Activated CD8-positive, alpha-beta T cell treated with anti-CD3 and anti-CD28 coated beads for 36 hours (primary cell): ENCODE measurements at regions of chr5 and their contacts with region 1.

Region 1: DNA sequence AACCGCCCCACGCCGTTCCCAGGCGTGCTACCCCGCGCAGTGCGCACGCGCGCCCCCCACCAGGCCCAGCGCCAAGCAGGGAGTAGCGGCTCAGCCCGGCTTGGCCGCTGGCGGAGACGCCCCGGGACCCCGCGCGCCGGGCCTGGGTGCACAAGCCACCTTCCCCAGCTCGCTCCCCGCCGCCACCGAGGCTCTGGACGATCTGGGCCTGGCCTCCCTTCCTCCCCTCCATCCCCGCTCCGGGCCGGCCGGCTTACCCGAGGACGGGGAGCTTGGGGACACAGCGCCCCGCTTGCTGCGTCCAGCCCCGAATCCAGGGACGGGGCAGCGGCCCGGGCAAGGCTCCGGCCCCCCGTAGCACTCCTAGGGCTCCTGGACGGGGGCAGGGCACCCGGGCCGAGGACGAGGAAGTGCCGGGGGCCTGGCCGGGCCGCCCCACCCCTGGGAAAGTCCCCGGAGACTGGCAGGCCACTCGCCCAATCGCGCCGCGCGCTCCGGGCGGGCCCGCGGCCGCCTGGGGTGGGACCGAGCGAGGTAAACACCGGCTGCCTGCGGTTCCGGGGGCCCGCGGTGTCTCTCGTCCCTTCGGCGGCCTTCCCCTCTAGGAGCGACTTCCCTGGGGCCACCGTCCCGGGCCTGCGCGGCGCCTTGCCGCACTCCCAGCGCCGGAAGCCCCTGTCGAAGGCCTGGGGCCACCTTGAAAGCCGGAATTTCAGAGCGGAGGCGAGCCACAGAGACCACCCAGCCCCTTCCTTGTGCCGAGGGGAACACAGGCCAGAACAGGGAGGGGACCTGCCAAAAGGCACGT is at the start of gene TNIP1:
- DNase-seq: peak; percentile 94
- ATAC-seq: peak; percentile 79
- H3K4me3 Mint-ChIP-seq: peak within 1 kb of the TSS; percentile 85
- H3K27ac Mint-ChIP-seq: peak within 1 kb of the TSS; percentile 96
- H3K4me1 Mint-ChIP-seq: peaks cover 77% of the 10 kb centered on the region
- H3K27me3 Mint-ChIP-seq: no peaks in the 10 kb centered on the region
- CTCF ChIP-seq: no peak
- total RNA-seq, gene TNIP1: 222 TPM

Region 2: DNA sequence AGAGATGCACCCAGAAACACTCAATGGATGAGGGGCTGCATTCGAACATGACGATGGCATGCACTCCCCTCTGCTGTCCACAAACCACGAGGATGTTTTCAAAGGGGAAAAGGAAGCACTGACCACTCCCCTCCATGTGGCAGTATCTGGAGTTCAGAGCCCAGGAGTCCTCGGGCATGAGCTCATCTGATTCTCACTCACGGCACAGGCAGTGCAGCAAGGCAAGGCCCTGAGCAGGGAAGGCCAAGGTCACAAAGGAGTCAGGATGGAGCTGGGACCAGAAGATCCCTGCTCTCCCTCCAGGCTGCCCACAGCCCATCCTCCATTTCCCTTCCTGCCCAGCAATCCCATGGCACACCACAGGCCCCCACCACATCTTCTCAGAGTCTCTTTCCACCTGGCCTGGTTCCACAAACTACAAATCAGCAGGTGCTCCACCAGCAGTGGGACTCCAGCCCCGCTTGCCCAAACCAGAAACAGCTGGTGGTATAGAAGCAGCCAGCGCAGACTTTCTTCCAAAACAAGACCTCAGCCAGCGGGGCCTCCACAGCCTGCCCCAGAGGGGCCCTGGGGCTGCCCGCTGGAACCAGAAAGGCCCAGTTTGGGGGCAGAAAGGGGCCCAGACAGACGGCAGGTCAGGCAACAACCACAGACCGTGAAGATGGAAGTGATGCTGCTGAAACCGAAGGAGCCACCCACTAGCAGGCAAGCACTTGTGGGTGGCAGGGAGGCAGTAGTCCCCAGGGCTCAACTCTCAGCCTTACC is 12.2 kb before region 1 on chr5:
- CTCF ChIA-PET with region 1: interaction called, 9 read pairs
- POLR2A ChIA-PET with region 1: interaction called, 25 read pairs
- intact Hi-C with region 1: no loop called
- DNase-seq: peak; percentile 81
- ATAC-seq: peak; percentile 80
- H3K4me3 Mint-ChIP-seq: peak overlapping the region; percentile 35
- H3K27ac Mint-ChIP-seq: peak overlapping the region; percentile 85
- H3K4me1 Mint-ChIP-seq: peaks cover 95% of the 10 kb centered on the region
- H3K27me3 Mint-ChIP-seq: no peaks in the 10 kb centered on the region
- CTCF ChIP-seq: no peak

Region 3: DNA sequence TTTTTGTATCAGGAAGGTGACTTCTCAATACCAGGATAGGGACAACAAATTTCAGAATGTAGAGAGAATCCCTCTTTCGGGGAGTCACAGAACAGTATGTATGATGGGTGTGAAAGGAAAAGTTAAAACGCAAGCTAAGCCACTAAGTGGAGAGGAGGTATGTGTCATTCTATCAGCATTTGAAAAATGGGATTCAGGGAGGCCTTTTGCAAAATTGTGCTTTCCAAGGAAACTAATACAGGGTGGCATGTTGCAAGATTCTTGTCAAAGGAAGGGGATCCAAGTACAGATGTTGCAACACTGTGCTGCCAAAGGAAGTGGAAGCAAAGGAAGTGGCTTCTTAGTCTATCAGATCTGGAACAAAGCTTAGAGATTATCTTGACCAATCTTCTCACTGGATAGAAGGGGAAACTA is 12.7 kb after region 1 on chr5:
- CTCF ChIA-PET with region 1: interaction called, 9 read pairs
- POLR2A ChIA-PET with region 1: interaction called, 65 read pairs
- intact Hi-C with region 1: no loop called
- DNase-seq: no peak
- ATAC-seq: peak; percentile 15
- H3K4me3 Mint-ChIP-seq: peak overlapping the region; percentile 61
- H3K27ac Mint-ChIP-seq: peak overlapping the region; percentile 93
- H3K4me1 Mint-ChIP-seq: peaks cover 68% of the 10 kb centered on the region
- H3K27me3 Mint-ChIP-seq: peaks cover 4% of the 10 kb centered on the region
- CTCF ChIP-seq: no peak

Region 4: DNA sequence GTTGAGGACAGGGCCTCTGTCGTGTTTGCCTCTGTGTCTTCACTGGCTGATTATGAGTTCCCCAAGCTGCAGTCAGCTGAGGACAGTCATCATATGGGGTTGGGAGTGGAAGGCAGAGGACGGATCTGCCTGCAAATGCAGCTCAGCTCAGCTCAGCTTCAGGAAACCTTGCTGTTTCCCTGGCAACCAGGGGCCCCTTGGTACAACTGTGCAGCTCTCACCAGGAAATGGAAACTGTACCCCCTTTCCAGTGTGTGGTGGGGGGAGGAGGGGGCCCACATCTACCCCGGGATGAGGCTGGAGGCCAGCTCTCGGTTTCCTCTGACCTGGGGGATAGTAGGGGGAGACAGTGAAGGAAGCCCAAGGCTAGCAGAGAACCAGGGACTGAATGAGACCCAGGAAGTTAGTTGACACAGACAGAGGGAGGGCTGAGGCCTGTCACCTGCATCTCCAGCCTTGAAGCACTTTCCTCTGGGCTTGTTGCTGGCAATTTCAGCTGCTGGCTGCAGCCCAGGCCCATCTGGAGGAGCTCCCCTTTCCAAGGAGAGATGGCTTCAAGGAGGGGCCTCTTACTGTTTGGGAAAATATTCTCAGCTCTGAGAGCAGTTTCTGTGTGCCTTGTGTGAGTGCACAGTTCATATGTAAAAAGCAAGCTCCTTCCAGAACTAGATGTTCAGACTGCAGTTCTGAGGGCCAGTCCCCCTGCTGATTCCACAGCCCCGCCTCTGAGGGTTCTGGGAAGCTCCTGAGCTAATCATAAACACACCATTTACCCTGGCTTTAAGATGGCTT is 69.8 kb after region 1 on chr5:
- CTCF ChIA-PET with region 1: interaction called, 3 read pairs
- POLR2A ChIA-PET with region 1: interaction called, 3 read pairs
- intact Hi-C with region 1: loop called (anchors 5 kb)
- DNase-seq: peak; percentile 90
- ATAC-seq: peak; percentile 63
- H3K4me3 Mint-ChIP-seq: peak overlapping the region; percentile 49
- H3K27ac Mint-ChIP-seq: peak overlapping the region; percentile 89
- H3K4me1 Mint-ChIP-seq: peaks cover 92% of the 10 kb centered on the region
- H3K27me3 Mint-ChIP-seq: no peaks in the 10 kb centered on the region
- CTCF ChIP-seq: no peak

Region 5: GRCh38 chr5:151213800-151214613 is 133.2 kb after region 1 on chr5:
- CTCF ChIA-PET with region 1: no interaction called
- POLR2A ChIA-PET with region 1: interaction called, 3 read pairs
- intact Hi-C with region 1: loop called (anchors 5 kb)
- DNase-seq: peak; percentile 94
- ATAC-seq: peak; percentile 86
- H3K4me3 Mint-ChIP-seq: peak overlapping the region; percentile 88
- H3K27ac Mint-ChIP-seq: peak overlapping the region; percentile 99
- H3K4me1 Mint-ChIP-seq: peaks cover 75% of the 10 kb centered on the region
- H3K27me3 Mint-ChIP-seq: no peaks in the 10 kb centered on the region
- CTCF ChIP-seq: no peak

Region 6: GRCh38 chr5:151224372-151224771 is 143.5 kb after region 1 on chr5:
- CTCF ChIA-PET with region 1: no interaction called
- POLR2A ChIA-PET with region 1: no interaction called
- intact Hi-C with region 1: no loop called
- DNase-seq: no peak
- ATAC-seq: peak; percentile 11
- H3K4me3 Mint-ChIP-seq: peak overlapping the region; percentile 92
- H3K27ac Mint-ChIP-seq: peak overlapping the region; percentile 94
- H3K4me1 Mint-ChIP-seq: peaks cover 48% of the 10 kb centered on the region
- H3K27me3 Mint-ChIP-seq: no peaks in the 10 kb centered on the region
- CTCF ChIP-seq: no peak